ENCODE measurements at regions of chr1 and their contacts with region 1.

Region 1: GRCh38 chr1:78617615-78618026 is 2.6 kb upstream of the IFI44L start:
- DNase-seq: peak; percentile 53 to 68 (median 64)
- H3K4me3 ChIP-seq: no peak overlapping the region
- H3K27ac ChIP-seq: no peak overlapping the region
- H3K4me1 ChIP-seq: peaks cover 2% of the 10 kb centered on the region
- H3K27me3 ChIP-seq: no peaks in the 10 kb centered on the region
- CTCF ChIP-seq: peak; percentile 73 to 82 (median 73)
- EP300 ChIP-seq: no peak
- POLR2A ChIP-seq: no peak

Region 2: DNA sequence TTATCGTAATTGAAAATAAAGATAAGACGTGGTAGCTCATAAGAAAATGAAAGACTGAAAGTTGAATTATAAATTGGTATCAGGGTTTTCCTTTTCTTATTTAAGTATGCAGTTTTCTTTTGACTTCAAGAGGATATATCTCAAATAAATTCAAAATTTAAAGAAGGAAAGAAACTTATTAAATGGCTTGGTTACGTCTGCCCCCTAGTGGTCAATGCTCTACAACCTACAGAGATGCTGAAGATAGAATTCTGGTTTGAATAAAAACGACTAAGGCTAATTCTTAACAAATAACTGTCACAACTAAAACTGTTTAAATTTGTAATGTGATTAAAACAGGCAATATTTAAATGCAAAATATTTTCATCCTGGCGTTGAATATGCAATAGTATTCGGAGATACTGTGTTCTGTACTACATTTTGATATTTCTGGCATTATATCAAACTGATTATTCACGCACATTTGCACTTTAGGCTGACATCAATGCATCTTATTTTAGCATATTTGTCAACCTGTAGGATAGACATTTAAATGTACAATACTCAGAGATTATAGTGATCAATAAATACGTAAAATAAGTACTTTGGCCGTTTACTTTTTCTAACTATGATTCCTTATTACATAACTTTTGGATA is 58.8 kb after region 1 on chr1:
- intact Hi-C with region 1: loop called (anchors 1 to 10 kb)
- DNase-seq: peak in 4 of 5 donors; percentile 21 to 66 (median 29)
- H3K4me3 ChIP-seq: no peak overlapping the region
- H3K27ac ChIP-seq: no peak overlapping the region
- H3K4me1 ChIP-seq: no peaks in the 10 kb centered on the region
- H3K27me3 ChIP-seq: no peaks in the 10 kb centered on the region
- CTCF ChIP-seq: peak; percentile 74 to 82 (median 80)
- EP300 ChIP-seq: no peak
- POLR2A ChIP-seq: no peak